A673 (cell line): ENCODE measurements at regions of chr19 and their contacts with region 1.

Region 1: GRCh38 chr19:4877753-4878490 is 10.5 kb upstream of the PLIN3 start:
- DNase-seq: no peak
- H3K4me3 ChIP-seq: no peak overlapping the region
- H3K27ac ChIP-seq: no peak overlapping the region
- H3K4me1 ChIP-seq: no peaks in the 10 kb centered on the region
- H3K27me3 ChIP-seq: no peaks in the 10 kb centered on the region
- CTCF ChIP-seq: no peak

Region 2: GRCh38 chr19:4889034-4889815 is 11.3 kb after region 1 on chr19:
- CTCF ChIA-PET with region 1: interaction called, 11 read pairs
- POLR2A ChIA-PET with region 1: no interaction called
- intact Hi-C with region 1: no loop called
- DNase-seq: no peak
- H3K4me3 ChIP-seq: no peak overlapping the region
- H3K27ac ChIP-seq: no peak overlapping the region
- H3K4me1 ChIP-seq: no peaks in the 10 kb centered on the region
- H3K27me3 ChIP-seq: no peaks in the 10 kb centered on the region
- CTCF ChIP-seq: no peak

Region 3: GRCh38 chr19:5091018-5091683 is 213.2 kb after region 1 on chr19:
- CTCF ChIA-PET with region 1: no interaction called
- POLR2A ChIA-PET with region 1: no interaction called
- intact Hi-C with region 1: no loop called
- DNase-seq: peak; percentile 94
- H3K4me3 ChIP-seq: no peak overlapping the region
- H3K27ac ChIP-seq: peak overlapping the region; percentile 100
- H3K4me1 ChIP-seq: peaks cover 64% of the 10 kb centered on the region
- H3K27me3 ChIP-seq: no peaks in the 10 kb centered on the region
- CTCF ChIP-seq: no peak